ENCODE measurements at regions of chr19 and their contacts with region 1.

Region 1: DNA sequence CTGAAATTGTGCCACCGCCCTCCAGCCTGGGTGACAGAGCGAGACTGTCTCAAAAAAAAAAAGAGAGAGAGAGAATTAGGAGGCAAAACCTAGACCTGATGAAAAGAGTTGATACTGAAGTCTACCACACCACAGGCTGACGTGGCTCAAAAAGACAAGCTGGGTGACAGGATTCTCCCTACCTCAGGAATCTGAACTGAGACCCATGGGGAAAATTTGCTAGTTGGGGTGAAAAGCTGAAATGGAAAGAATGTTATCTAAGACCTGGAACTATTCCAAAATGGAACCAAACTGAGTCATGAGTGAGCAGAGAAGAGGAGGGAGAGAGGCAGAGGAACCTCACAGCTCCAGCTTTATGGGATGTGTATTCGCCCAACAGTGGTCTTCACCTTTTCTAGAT is 11.7 kb downstream of the SMG9 start:
- DNase-seq: no peak
- H3K4me3 ChIP-seq: no peak overlapping the region
- H3K27ac ChIP-seq: no peak overlapping the region
- H3K4me1 ChIP-seq: peaks cover 7 to 51% (median 32%) of the 10 kb centered on the region in 6 donors
- H3K27me3 ChIP-seq: no peaks in the 10 kb centered on the region
- CTCF ChIP-seq: no peak
- POLR2A ChIP-seq: no peak

Region 2: DNA sequence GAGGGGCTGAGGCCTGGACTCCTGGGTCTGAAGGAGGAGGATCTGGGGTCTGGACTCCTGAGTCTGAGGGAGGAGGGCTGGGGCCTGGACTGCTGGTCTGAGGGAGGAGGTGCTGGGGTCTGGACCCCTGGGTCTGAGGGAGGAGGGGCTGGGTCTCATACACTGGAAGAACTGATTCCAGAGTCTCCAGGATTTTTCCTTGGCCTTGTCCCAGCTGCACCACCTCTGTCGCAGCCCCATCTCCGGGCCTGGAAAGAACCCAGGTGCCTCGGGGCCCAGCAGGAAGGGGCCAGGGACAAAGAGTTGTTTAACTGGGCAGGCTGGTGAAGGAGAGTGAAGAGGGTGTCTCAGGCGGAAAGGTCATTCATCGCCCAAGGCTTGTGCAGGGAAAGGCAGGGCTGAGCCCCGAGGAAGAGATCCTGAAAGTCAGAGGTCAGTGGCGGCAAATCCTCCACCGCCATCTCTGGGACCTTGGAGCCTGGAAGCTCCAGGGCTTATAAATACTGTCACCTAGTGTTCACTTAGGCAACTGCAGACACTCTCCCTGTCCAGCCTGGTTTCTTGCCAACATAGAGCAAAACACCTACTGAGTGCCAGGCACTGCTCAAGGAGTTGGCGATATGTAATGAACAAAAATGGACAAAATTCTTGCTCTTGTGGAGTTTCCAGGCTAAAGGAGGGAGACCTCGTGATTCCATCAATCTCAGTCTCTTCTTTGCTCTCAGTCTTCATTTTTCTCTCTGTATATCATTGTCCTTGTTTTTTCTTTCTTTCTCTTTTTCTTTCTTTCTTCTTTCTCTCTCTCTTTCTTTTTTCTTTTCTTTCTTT is 42.2 kb after region 1 on chr19:
- intact Hi-C with region 1: loop called (anchors 1 kb)
- DNase-seq: peak; percentile 84
- H3K4me3 ChIP-seq: peak overlapping the region in 1 of 8 donors; percentile 25
- H3K27ac ChIP-seq: peak overlapping the region in 5 of 8 donors; percentile 51 to 86 (median 81)
- H3K4me1 ChIP-seq: peaks cover 0 to 52% (median 29%) of the 10 kb centered on the region in 6 donors
- H3K27me3 ChIP-seq: peaks cover 0 to 17% (median 0%) of the 10 kb centered on the region in 7 donors
- CTCF ChIP-seq: peak; percentile 88 to 97 (median 94)
- POLR2A ChIP-seq: no peak

Measured in spleen (tissue), 13 donors.